ENCODE measurements at regions of chr2 and their contacts with region 1.

Region 1: GRCh38 chr2:120342446-120342845 is 3.5 kb upstream of the INHBB start:
- DNase-seq: no peak
- CTCF ChIP-seq: no peak

Region 2: GRCh38 chr2:120404021-120404673 is 61.7 kb after region 1 on chr2:
- CTCF ChIA-PET with region 1: no interaction called
- POLR2A ChIA-PET with region 1: interaction called, 11 read pairs
- DNase-seq: no peak
- CTCF ChIP-seq: no peak

Measured in GM10248 (cell line).